ENCODE measurements at regions of chr11 and their contacts with region 1.

Region 1: GRCh38 chr11:45110562-45110961 is 35.9 kb upstream of the PRDM11 start:
- DNase-seq: peak; percentile 46 to 49
- H3K4me3 ChIP-seq: no peak overlapping the region
- H3K27ac ChIP-seq: no peak overlapping the region
- H3K4me1 ChIP-seq: no peaks in the 10 kb centered on the region
- H3K27me3 ChIP-seq: peaks cover 16% of the 10 kb centered on the region; the same call in 1 of the 2 replicates
- CTCF ChIP-seq: peak; percentile 83

Region 2: GRCh38 chr11:45097721-45098493 is 12.7 kb before region 1 on chr11:
- CTCF ChIA-PET with region 1: no interaction called
- POLR2A ChIA-PET with region 1: no interaction called
- intact Hi-C with region 1: no loop called
- DNase-seq: no peak
- H3K4me3 ChIP-seq: no peak overlapping the region
- H3K27ac ChIP-seq: no peak overlapping the region
- H3K4me1 ChIP-seq: no peaks in the 10 kb centered on the region
- H3K27me3 ChIP-seq: peaks cover 51% of the 10 kb centered on the region
- CTCF ChIP-seq: no peak

Region 3: GRCh38 chr11:45282081-45282480 is 171.5 kb after region 1 on chr11:
- CTCF ChIA-PET with region 1: interaction called, 11 read pairs
- POLR2A ChIA-PET with region 1: no interaction called
- intact Hi-C with region 1: no loop called
- DNase-seq: no peak
- H3K4me3 ChIP-seq: no peak overlapping the region
- H3K27ac ChIP-seq: no peak overlapping the region
- H3K4me1 ChIP-seq: no peaks in the 10 kb centered on the region
- H3K27me3 ChIP-seq: peaks cover 73% of the 10 kb centered on the region
- CTCF ChIP-seq: no peak

Region 4: GRCh38 chr11:45289369-45289768 is 178.8 kb after region 1 on chr11:
- CTCF ChIA-PET with region 1: interaction called, 3 read pairs
- POLR2A ChIA-PET with region 1: no interaction called
- intact Hi-C with region 1: loop called (anchors 1 kb)
- DNase-seq: no peak
- H3K4me3 ChIP-seq: no peak overlapping the region
- H3K27ac ChIP-seq: no peak overlapping the region
- H3K4me1 ChIP-seq: no peaks in the 10 kb centered on the region
- H3K27me3 ChIP-seq: peaks cover 70% of the 10 kb centered on the region
- CTCF ChIP-seq: no peak

Region 5: GRCh38 chr11:45332276-45332934 is 221.8 kb after region 1 on chr11:
- CTCF ChIA-PET with region 1: interaction called, 4 read pairs
- POLR2A ChIA-PET with region 1: no interaction called
- intact Hi-C with region 1: loop called (anchors 1 kb)
- DNase-seq: peak in 1 of 2 experiments; percentile 10
- H3K4me3 ChIP-seq: no peak overlapping the region
- H3K27ac ChIP-seq: no peak overlapping the region
- H3K4me1 ChIP-seq: no peaks in the 10 kb centered on the region
- H3K27me3 ChIP-seq: peaks cover 72% of the 10 kb centered on the region
- CTCF ChIP-seq: peak; percentile 82

Region 6: DNA sequence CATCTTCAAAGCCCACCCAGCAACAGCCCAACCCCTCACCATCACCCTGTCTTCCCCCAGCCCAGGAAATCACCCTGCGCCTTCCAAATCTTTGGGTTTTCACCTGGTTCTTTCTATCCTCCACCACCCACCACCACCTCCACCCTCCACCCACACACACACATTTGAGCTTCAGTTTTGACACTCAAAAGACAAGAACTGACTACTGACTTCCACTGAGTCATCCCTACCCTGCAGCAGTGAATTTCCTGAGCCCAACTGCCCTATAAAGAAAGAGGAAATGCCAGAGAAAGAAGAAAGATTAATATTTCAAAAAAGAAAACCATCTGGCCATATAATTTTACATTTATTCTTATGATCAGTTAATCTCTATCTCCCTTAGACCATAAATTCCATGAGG is 417.3 kb after region 1 on chr11:
- CTCF ChIA-PET with region 1: interaction called, 11 read pairs
- POLR2A ChIA-PET with region 1: no interaction called
- intact Hi-C with region 1: no loop called
- DNase-seq: no peak
- H3K4me3 ChIP-seq: no peak overlapping the region
- H3K27ac ChIP-seq: no peak overlapping the region
- H3K4me1 ChIP-seq: no peaks in the 10 kb centered on the region
- H3K27me3 ChIP-seq: peaks cover 72% of the 10 kb centered on the region
- CTCF ChIP-seq: no peak